MCF 10A (cell line): ENCODE measurements at regions of chr9 and their contacts with region 1.

Region 1: GRCh38 chr9:95018099-95018936 is 291.8 kb downstream of the AOPEP start:
- DNase-seq: peak; percentile 97
- H3K4me3 Mint-ChIP-seq: peak overlapping the region; percentile 31
- H3K27ac Mint-ChIP-seq: peak overlapping the region; percentile 94
- H3K4me1 Mint-ChIP-seq: peaks cover 41% of the 10 kb centered on the region
- H3K27me3 Mint-ChIP-seq: no peaks in the 10 kb centered on the region
- CTCF ChIP-seq: no peak

Region 2: GRCh38 chr9:94726495-94727191 is 291.7 kb before region 1 on chr9 and contains the start of gene AOPEP:
- CTCF ChIA-PET with region 1: no interaction called
- POLR2A ChIA-PET with region 1: no interaction called
- intact Hi-C with region 1: loop called (anchors 5 kb)
- DNase-seq: peak; percentile 95
- H3K4me3 Mint-ChIP-seq: peak within 1 kb of the TSS; percentile 91
- H3K27ac Mint-ChIP-seq: peak within 1 kb of the TSS; percentile 95
- H3K4me1 Mint-ChIP-seq: peaks cover 13% of the 10 kb centered on the region
- H3K27me3 Mint-ChIP-seq: no peaks in the 10 kb centered on the region
- CTCF ChIP-seq: no peak
- total RNA-seq, gene AOPEP: 32.4 and 34.6 TPM in 2 replicates

Region 3: GRCh38 chr9:95037789-95038517 is 19.6 kb after region 1 on chr9:
- CTCF ChIA-PET with region 1: interaction called, 4 read pairs
- POLR2A ChIA-PET with region 1: interaction called, 16 read pairs
- intact Hi-C with region 1: no loop called
- DNase-seq: no peak
- H3K4me3 Mint-ChIP-seq: no peak overlapping the region
- H3K27ac Mint-ChIP-seq: no peak overlapping the region
- H3K4me1 Mint-ChIP-seq: peaks cover 21% of the 10 kb centered on the region
- H3K27me3 Mint-ChIP-seq: no peaks in the 10 kb centered on the region
- CTCF ChIP-seq: no peak

Region 4: GRCh38 chr9:95048225-95049087 is 30.1 kb after region 1 on chr9:
- CTCF ChIA-PET with region 1: interaction called, 5 read pairs
- POLR2A ChIA-PET with region 1: interaction called, 31 read pairs
- intact Hi-C with region 1: no loop called
- DNase-seq: peak; percentile 85
- H3K4me3 Mint-ChIP-seq: peak overlapping the region; percentile 78
- H3K27ac Mint-ChIP-seq: peak overlapping the region; percentile 76
- H3K4me1 Mint-ChIP-seq: peaks cover 16% of the 10 kb centered on the region
- H3K27me3 Mint-ChIP-seq: no peaks in the 10 kb centered on the region
- CTCF ChIP-seq: no peak

Region 5: DNA sequence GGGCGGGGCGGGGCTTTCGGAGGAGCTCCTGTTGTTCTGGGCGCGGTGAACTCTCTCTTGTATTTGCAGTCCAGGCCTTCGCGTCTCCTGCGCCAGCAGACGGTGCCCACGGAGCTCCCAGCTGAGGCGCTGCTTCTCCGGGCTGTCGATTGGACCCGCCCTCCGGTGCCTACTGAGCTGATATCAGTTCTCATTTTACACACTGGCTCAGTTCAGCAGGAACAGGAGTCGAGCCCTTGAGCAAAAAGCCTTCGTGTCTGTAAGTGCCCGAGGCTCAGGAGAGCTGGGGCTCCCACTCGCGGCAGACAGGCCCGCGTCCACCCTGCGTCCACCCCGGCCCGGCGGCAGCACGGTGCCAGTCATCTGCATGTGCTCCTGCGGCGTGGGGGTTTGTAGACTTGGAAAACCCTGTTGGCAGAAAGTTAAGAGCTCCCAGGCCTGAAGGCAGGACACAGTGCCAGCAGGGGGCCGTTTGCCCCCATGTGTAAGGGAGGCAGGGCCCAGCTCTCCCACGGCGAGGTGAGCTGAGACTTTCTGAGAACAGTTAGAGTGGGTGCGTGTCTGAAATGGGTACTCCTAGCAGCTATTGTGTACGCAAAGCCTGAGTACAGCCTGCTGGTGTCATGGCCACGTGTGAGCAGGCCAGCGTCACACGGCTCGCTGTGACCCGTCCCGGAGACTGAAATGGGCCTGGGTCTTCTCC is 67.7 kb after region 1 on chr9:
- CTCF ChIA-PET with region 1: no interaction called
- POLR2A ChIA-PET with region 1: no interaction called
- intact Hi-C with region 1: no loop called
- DNase-seq: no peak
- H3K4me3 Mint-ChIP-seq: no peak overlapping the region
- H3K27ac Mint-ChIP-seq: no peak overlapping the region
- H3K4me1 Mint-ChIP-seq: peaks cover 5% of the 10 kb centered on the region
- H3K27me3 Mint-ChIP-seq: no peaks in the 10 kb centered on the region
- CTCF ChIP-seq: no peak